Dendritic cell treated with granulocyte-macrophage colony-stimulating factor and Interleukin-4, amounts not matched to agents 40 ng/mL and 50 ng/mL, for 4 days (primary cell): ENCODE measurements at regions of chr5 and their contacts with region 1.

Region 1: DNA sequence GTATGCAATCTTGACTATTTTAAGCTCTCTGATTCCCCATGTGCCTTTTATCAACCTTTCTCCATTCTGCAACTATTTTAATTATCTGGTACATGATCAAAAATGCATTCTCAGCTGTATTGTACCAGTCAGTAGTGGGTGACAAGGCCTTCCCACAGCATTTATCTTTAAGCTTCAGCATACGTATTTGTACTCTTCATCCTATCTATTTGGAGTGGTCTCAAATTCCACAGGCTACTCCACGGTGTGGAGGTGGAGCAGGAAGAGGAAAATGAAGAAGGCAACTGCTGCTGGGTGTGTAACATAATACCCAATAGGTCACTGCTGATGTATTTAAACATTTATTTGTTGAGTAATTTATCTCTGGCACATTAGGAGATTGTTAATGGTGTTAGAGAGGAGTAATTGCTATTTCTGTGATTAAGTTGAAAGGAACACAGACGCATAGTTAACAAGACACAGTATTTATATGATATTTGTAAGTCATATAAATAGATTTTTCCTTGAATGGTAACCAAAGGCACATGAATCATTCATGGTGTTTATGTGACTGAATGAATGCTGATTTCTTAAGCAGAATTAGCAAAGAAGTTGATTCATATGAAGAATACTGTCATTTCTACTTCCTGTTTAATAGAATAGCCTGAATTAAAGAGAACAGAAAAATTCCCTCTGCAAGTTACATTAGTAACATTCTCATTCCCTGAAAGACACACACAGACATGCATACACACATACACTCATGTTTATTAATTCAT is 153.8 kb upstream of the NR3C1 start:
- H3K4me3 Mint-ChIP-seq: no peak overlapping the region
- H3K27ac Mint-ChIP-seq: peak overlapping the region; percentile 70
- H3K4me1 Mint-ChIP-seq: peaks cover 48% of the 10 kb centered on the region
- H3K27me3 Mint-ChIP-seq: no peaks in the 10 kb centered on the region

Region 2: DNA sequence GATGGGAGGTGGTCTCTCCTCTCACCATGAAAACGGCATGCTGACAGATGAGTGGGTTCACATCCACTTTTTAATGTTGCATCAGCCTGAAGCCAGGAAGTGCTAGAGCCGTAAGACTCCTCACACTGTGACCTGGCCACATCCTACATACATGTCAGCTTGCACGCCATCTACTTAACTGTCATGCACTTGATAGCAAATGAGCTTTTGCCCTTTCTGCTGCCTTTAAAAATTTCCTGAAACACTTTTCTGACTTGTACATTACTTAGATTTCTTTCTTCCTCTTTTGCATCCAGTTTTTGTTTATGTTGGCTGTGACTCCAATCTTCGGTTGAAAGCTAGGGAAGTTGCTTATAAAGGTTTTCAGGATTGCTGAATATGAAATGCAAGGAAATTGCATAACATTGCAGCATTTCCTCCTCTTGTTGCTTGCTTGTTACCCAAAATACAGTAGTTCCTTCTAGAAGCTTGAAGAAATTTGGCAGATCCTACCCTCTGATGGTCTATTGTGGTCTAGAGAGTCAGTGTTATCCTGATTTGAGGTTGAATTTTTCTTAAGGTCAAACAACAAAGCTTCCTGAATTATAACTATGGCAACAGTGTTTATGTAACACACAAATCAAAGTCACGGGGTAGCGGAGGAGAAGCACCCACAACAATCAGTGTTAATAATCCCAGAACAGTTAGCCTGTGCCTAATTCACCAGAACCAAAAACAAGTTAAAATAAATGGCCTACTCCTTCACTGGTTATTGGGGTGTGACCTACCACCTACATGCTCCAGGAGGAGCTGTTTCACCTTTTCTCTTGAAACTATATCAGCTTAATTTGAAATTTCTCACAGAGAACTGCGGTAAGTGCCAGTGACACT is 554.5 kb before region 1 on chr5:
- intact Hi-C with region 1: loop called (anchors 10 kb)
- H3K4me3 Mint-ChIP-seq: peak overlapping the region; percentile 13
- H3K27ac Mint-ChIP-seq: peak overlapping the region; percentile 90
- H3K4me1 Mint-ChIP-seq: peaks cover 81% of the 10 kb centered on the region
- H3K27me3 Mint-ChIP-seq: no peaks in the 10 kb centered on the region

Region 3: DNA sequence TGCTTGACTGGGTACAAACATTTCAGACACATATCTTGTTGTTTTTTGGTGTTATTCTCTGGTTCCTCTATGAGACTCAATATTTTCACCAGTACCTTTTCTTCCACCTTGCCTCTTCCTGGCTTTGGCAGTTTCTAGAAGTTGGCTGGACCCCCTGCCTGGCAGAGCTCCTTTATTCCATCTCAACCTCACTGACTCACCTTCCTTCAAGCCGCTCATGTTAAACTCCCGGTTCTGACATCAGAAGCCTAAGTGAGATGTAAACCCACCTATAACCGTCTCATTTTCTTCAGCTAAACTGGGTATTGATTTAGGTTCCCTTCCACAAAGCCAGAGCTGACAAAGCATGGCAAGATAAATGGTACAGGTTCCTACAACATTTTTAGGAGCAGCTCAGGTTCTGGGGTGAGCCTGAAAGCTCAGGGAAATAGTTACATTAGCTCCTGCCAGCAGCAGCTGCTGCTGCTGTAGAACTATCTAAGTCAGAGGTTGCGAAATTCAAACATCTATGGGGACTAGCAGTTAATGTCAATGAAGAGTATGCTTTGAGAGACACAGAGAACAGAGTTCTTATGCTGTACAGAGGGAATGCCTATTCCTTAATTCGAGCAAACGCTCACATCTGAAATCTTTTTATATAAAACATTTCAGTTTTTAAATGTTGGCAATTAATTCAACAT is 43.3 kb after region 1 on chr5:
- intact Hi-C with region 1: loop called (anchors 5 kb)
- H3K4me3 Mint-ChIP-seq: no peak overlapping the region
- H3K27ac Mint-ChIP-seq: no peak overlapping the region
- H3K4me1 Mint-ChIP-seq: peaks cover 47% of the 10 kb centered on the region
- H3K27me3 Mint-ChIP-seq: peaks cover 9% of the 10 kb centered on the region

Region 4: DNA sequence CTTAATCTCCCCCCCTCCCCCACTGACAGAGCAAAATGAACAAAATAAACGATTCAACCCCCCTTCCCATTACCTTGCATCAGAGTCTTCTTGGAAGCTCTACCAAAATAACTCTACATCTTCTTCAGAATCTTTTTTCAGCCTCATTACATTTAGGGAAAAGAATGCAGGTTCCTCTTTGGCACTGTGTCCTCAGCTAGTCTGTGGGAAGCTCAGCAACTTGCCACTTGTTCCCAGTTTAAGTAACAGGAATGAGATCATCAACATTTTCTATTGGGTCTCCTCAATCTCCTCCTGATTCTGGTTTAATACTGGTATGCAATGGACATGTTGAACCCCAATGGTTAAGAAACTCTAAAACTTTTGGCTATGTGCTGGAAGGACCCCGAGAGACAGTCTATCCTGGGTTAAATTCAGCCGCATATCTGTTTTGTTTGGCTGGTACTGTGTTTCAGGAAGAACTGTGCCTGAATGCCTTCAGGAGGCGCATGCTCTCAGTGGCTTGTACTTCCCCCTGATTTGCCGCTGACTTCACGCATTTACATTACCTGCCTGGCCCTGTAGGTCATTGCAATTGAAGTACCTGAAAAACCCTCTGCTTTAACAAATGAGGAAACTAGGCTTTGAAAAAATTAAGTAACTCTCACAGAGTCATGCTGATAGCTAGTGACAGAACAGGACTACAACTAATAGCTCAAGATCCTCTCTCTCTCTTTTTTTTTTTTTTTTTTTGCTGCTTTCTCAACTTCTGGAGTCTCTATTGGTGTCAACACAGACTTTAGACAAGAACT is 176.6 kb after region 1 on chr5:
- intact Hi-C with region 1: no loop called
- H3K4me3 Mint-ChIP-seq: no peak overlapping the region
- H3K27ac Mint-ChIP-seq: no peak overlapping the region
- H3K4me1 Mint-ChIP-seq: peaks cover 7% of the 10 kb centered on the region
- H3K27me3 Mint-ChIP-seq: no peaks in the 10 kb centered on the region